ENCODE measurements at regions of chr9 and their contacts with region 1.

Region 1: GRCh38 chr9:122228568-122229484 is at the start of gene LHX6:
- DNase-seq: no peak
- ATAC-seq: peak; percentile 37
- H3K4me3 ChIP-seq: no peak within 1 kb of the TSS
- H3K4me1 ChIP-seq: peaks cover 15% of the 10 kb centered on the region
- CTCF ChIP-seq: no peak
- total RNA-seq, gene LHX6: 2.0 to 5.1 (median 2.3) TPM

Region 2: GRCh38 chr9:121783521-121784507 is 445.0 kb before region 1 on chr9:
- intact Hi-C with region 1: no loop called
- DNase-seq: no peak
- ATAC-seq: no peak
- H3K4me3 ChIP-seq: no peak overlapping the region
- H3K4me1 ChIP-seq: no peaks in the 10 kb centered on the region
- CTCF ChIP-seq: no peak

Region 3: DNA sequence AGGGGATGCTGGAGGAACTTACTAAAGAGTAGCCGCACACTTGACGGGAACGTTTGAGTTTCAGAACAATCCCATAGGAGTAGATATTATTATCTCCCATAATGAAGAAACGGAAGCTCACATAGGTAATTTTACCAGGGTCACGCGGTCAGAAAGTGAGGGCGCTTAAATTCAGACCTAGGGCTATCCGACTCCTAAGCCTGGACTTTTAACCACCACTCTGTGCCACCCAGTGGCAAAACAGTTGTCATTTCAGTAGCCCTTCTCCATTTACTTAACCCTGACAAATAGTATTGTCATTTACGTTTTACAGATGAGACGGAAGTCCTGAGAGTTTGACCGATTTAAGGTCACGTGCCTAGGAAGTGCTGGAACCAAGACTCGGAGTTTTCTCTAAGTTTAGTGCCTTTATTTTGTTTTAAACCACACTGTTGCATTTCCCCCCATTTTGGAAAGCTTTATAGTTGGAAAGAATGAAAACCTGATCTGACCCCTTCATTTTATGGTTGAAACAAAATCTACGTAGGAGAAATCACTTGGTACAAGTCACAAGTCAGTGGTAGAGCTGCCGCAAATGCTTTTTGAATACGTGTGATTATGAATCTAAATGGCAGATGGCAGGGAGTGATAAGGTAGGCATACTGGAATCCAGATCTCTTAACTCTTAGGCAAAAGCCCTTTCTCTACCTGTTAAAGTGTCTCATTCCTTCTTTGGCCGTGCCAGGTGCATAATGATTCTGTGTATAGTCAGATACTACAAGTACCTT is 36.5 kb after region 1 on chr9:
- intact Hi-C with region 1: no loop called
- DNase-seq: peak in 1 of 3 donors; percentile 43
- ATAC-seq: peak; percentile 60
- H3K4me3 ChIP-seq: peak overlapping the region; percentile 69
- H3K4me1 ChIP-seq: peaks cover 25% of the 10 kb centered on the region
- CTCF ChIP-seq: no peak

Region 4: GRCh38 chr9:122286764-122287163 is 57.9 kb after region 1 on chr9:
- intact Hi-C with region 1: loop called in 1 of 2 experiments (anchors 10 kb)
- DNase-seq: no peak
- ATAC-seq: no peak
- H3K4me3 ChIP-seq: no peak overlapping the region
- H3K4me1 ChIP-seq: no peaks in the 10 kb centered on the region
- CTCF ChIP-seq: no peak

Measured in mucosa of descending colon (tissue), 3 donors.